Activated CD8-positive, alpha-beta T cell treated with anti-CD3 and anti-CD28 coated beads for 36 hours (primary cell): ENCODE measurements at regions of chr9 and their contacts with region 1.

Region 1: GRCh38 chr9:89549031-89549644 is 51.2 kb upstream of the SEMA4D start:
- DNase-seq: peak; percentile 90
- ATAC-seq: peak; percentile 98
- H3K4me3 Mint-ChIP-seq: no peak overlapping the region
- H3K27ac Mint-ChIP-seq: peak overlapping the region; percentile 61
- H3K4me1 Mint-ChIP-seq: peaks cover 17% of the 10 kb centered on the region
- H3K27me3 Mint-ChIP-seq: no peaks in the 10 kb centered on the region
- CTCF ChIP-seq: peak; percentile 99

Region 2: GRCh38 chr9:89375191-89375760 is 173.9 kb before region 1 on chr9:
- CTCF ChIA-PET with region 1: interaction called, 19 read pairs
- POLR2A ChIA-PET with region 1: no interaction called
- intact Hi-C with region 1: no loop called
- DNase-seq: peak; percentile 64
- ATAC-seq: peak; percentile 43
- H3K4me3 Mint-ChIP-seq: no peak overlapping the region
- H3K27ac Mint-ChIP-seq: peak overlapping the region; percentile 87
- H3K4me1 Mint-ChIP-seq: peaks cover 46% of the 10 kb centered on the region
- H3K27me3 Mint-ChIP-seq: no peaks in the 10 kb centered on the region
- CTCF ChIP-seq: no peak

Region 3: GRCh38 chr9:89428901-89429890 is 119.9 kb before region 1 on chr9:
- CTCF ChIA-PET with region 1: interaction called, 84 read pairs
- POLR2A ChIA-PET with region 1: interaction called, 4 read pairs
- intact Hi-C with region 1: loop called (anchors 5 kb)
- DNase-seq: peak; percentile 83
- ATAC-seq: peak; percentile 35
- H3K4me3 Mint-ChIP-seq: peak overlapping the region; percentile 26
- H3K27ac Mint-ChIP-seq: peak overlapping the region; percentile 98
- H3K4me1 Mint-ChIP-seq: peaks cover 91% of the 10 kb centered on the region
- H3K27me3 Mint-ChIP-seq: no peaks in the 10 kb centered on the region
- CTCF ChIP-seq: peak; percentile 71

Region 4: GRCh38 chr9:89448381-89448780 is 100.8 kb before region 1 on chr9:
- CTCF ChIA-PET with region 1: interaction called, 22 read pairs
- POLR2A ChIA-PET with region 1: no interaction called
- intact Hi-C with region 1: no loop called
- DNase-seq: peak; percentile 82
- ATAC-seq: peak; percentile 77
- H3K4me3 Mint-ChIP-seq: peak overlapping the region; percentile 12
- H3K27ac Mint-ChIP-seq: peak overlapping the region; percentile 90
- H3K4me1 Mint-ChIP-seq: peaks cover 95% of the 10 kb centered on the region
- H3K27me3 Mint-ChIP-seq: no peaks in the 10 kb centered on the region
- CTCF ChIP-seq: no peak

Region 5: DNA sequence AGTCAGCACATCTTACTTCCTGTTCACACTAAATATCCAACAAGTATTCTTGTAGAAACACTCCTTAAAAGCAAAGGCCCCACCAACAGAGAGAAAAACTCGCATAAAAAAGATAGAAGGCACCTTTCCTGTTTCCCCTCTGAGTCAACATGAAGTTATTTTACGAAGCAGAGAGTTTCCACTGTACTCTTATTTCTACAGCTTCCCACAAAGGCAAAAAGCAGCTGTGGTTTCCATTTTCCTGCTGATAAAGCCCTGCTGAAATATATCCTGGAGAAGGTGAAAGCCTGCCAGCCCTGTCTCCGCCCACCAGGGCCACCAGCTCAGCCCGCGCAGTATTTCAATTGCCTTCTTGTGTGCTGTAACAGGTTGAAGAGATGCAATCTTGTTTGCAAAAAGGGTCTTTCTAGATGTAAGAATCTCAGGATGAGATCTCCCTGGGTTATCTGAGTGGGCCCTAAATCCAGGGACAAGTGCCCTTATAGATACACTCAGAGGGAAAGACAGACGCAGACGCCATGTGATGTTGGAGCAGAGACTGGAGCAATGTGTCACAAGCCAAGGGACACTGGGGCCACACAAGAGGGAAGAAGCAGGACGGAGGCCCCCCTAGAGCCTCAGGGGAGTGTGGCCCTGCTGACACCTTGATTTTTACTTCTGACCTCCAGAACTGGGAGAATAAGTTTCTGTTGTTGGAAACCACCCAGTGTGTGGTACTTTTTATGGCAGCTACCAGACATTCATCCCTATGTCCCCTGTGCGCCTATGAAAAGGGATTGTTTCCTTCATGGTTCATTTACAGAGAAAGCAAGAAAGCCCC is 71.1 kb before region 1 on chr9:
- CTCF ChIA-PET with region 1: interaction called, 21 read pairs
- POLR2A ChIA-PET with region 1: interaction called, 25 read pairs
- intact Hi-C with region 1: no loop called
- DNase-seq: peak; percentile 75
- ATAC-seq: peak; percentile 31
- H3K4me3 Mint-ChIP-seq: peak overlapping the region; percentile 90
- H3K27ac Mint-ChIP-seq: peak overlapping the region; percentile 98
- H3K4me1 Mint-ChIP-seq: peaks cover 85% of the 10 kb centered on the region
- H3K27me3 Mint-ChIP-seq: peaks cover 3% of the 10 kb centered on the region
- CTCF ChIP-seq: no peak

Region 6: DNA sequence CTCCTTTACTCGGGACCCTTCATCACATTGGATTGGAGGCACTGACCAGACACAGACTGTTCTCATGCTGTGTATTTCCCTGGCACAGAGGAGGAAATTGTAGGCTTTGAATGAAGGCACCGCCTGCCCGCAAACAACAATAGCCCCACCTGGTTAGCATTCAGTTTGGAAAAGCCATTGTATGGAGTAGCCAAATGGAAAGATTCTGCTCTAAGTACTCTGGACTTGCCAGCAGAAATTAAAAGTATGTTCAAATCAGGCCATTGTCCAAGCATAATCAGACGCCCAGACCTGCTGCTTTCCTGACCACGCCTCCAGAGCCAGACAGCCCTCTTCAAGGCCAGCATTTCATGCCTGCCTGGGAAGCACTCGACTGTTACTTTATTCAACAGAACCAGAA is 43.2 kb before region 1 on chr9:
- CTCF ChIA-PET with region 1: interaction called, 26 read pairs
- POLR2A ChIA-PET with region 1: interaction called, 7 read pairs
- intact Hi-C with region 1: no loop called
- DNase-seq: no peak
- ATAC-seq: no peak
- H3K4me3 Mint-ChIP-seq: no peak overlapping the region
- H3K27ac Mint-ChIP-seq: no peak overlapping the region
- H3K4me1 Mint-ChIP-seq: peaks cover 84% of the 10 kb centered on the region
- H3K27me3 Mint-ChIP-seq: no peaks in the 10 kb centered on the region
- CTCF ChIP-seq: no peak